ENCODE measurements at regions of chr1 and their contacts with region 1.

Region 1: DNA sequence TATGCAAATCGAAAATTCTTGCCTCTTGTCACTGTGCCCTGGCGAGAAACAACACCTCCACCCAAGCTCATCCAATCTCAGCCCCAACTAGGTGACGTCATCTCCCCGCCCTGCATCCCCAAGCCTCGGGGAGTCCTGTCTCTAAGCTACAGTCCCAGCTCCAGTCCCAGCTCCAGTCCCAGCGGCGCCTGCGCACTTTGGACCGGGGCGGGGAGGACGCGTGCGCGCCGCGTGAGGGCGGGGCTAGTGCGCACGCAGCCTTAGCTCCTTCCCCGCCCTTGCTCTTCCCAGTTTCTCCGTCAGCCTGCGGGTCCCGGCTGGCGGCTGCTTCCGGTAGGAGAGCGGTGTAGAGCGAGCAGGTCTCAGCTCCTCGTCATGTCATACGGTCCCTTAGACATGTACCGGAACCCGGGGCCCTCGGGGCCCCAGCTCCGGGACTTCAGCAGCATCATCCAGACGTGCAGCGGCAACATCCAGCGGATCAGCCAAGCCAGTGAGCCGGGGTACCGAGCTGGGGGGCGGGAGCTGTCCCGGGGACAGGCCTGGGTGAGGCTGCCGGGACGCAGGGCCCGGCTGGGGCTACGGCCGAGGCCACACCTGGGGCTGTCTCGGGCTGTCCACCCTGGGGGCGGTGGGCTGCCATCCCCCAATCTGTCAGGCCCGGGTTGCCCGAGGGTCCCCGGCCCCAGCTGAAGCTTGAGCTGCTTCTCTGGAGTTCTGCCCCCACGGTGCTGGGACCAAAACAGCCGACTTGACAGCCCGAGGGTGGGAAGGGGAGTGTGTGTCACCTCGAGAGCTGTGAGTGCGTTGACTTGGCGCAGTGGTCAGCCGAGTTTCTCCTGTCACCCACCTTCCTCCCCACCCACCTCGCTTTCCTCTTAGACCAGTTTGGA is at the start of gene STX12:
- DNase-seq: peak; percentile 99
- H3K4me3 Mint-ChIP-seq: peak within 1 kb of the TSS; percentile 94
- H3K27ac Mint-ChIP-seq: peak within 1 kb of the TSS; percentile 97
- H3K4me1 Mint-ChIP-seq: peaks cover 22% of the 10 kb centered on the region
- H3K27me3 Mint-ChIP-seq: no peaks in the 10 kb centered on the region
- total RNA-seq, gene STX12: 23.3 and 25.9 TPM in 2 replicates

Region 2: DNA sequence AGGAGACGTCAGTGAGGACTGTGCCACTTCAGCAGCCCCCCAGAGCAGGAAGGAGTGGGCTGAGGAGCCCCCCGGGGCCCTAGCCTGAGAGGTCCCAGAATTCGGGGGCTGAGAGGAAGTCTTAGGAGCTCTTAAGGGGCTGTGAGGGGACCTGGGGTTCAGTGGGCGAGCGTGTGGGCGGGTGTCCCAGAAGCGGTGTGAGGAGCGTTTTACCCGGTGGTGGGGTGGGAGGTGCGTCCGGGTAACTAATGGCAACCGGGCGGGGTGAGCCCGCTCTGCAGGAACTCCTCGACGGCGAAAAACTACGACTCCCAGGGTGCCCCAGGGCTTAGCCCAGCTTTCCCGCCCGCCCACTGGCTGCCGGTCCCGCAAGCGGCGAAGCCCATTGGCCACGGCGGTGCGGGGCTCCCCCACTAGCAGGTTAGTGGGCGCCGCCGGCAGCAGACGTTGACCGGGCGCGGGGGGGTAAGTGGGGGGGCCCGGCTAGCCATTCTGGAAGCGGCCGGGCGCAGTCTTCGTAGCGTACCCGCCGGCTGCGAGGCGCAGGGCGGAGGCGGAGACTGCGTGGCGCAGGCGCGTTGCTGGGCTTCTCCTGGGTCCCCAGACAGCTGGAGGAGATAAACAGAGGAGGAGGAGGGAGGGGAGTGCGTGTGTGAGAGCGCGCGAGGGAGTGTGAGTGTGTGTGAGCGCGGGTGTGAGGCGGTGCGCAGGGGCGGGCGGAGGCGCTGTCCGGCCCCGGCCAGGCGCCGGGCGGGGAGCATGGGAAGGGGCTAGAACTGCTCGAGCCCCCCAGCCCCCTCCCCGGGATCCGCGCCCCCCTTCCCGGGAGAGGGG is 538.9 kb before region 1 on chr1 and contains the start of gene WDTC1:
- intact Hi-C with region 1: loop called (anchors 2 kb)
- DNase-seq: peak; percentile 97
- H3K4me3 Mint-ChIP-seq: peak within 1 kb of the TSS; percentile 98
- H3K27ac Mint-ChIP-seq: peak within 1 kb of the TSS; percentile 96
- H3K4me1 Mint-ChIP-seq: peaks cover 27% of the 10 kb centered on the region
- H3K27me3 Mint-ChIP-seq: no peaks in the 10 kb centered on the region
- total RNA-seq, gene WDTC1: 22.3 and 22.4 TPM in 2 replicates

Region 3: DNA sequence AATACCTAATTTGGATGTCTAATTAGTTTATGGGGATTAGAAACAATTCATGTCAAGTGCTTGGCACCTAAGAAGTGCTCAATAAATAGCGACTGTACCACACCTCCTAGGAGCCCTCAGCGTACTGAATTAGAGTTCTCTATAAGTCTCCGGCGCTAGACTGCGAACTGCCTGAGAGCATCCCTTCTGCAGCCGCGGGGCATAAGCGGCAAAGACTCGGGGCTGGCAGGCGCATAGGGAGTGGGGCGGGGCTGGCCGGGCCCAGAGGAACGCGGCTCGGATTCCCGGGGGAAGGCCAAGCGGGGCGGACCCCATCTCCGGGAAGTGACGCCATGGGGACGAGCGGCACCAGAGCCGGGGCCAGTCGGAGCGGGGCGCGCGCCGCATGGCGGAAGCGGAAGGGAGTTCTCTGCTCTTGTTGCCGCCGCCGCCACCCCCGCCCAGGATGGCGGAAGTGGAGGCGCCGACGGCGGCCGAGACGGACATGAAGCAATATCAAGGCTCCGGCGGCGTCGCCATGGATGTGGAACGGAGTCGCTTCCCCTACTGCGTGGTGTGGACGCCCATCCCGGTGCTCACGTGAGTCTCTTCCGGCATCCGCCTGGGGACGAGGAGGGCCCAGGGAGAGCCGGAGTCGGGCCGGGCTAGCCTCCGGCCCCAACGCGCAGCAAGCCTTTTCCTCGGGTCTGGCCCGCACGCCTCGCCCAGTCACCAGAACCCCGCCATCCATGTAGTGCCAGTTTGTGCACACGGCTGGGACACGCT is 451.2 kb before region 1 on chr1 and contains the start of gene TMEM222:
- intact Hi-C with region 1: loop called (anchors 5 kb)
- DNase-seq: peak; percentile 97
- H3K4me3 Mint-ChIP-seq: peak within 1 kb of the TSS; percentile 97
- H3K27ac Mint-ChIP-seq: peak within 1 kb of the TSS; percentile 90
- H3K4me1 Mint-ChIP-seq: peaks cover 24% of the 10 kb centered on the region
- H3K27me3 Mint-ChIP-seq: peaks cover 3% of the 10 kb centered on the region
- total RNA-seq, gene TMEM222: 32.1 and 35.7 TPM in 2 replicates

Region 4: GRCh38 chr1:27489910-27490741 is 283.1 kb before region 1 on chr1 and contains the start of gene WASF2:
- intact Hi-C with region 1: loop called (anchors 2 kb)
- DNase-seq: peak; percentile 96
- H3K4me3 Mint-ChIP-seq: peak within 1 kb of the TSS; percentile 97
- H3K27ac Mint-ChIP-seq: peak within 1 kb of the TSS; percentile 99
- H3K4me1 Mint-ChIP-seq: peaks cover 24% of the 10 kb centered on the region
- H3K27me3 Mint-ChIP-seq: no peaks in the 10 kb centered on the region
- total RNA-seq, gene WASF2: 125 and 128 TPM in 2 replicates

Region 5: GRCh38 chr1:27671964-27672749 is 101.0 kb before region 1 on chr1 and contains the start of gene IFI6:
- intact Hi-C with region 1: loop called (anchors 1 kb)
- DNase-seq: peak; percentile 83
- H3K4me3 Mint-ChIP-seq: peak within 1 kb of the TSS; percentile 88
- H3K27ac Mint-ChIP-seq: peak within 1 kb of the TSS; percentile 92
- H3K4me1 Mint-ChIP-seq: peaks cover 33% of the 10 kb centered on the region
- H3K27me3 Mint-ChIP-seq: no peaks in the 10 kb centered on the region
- total RNA-seq, gene IFI6: 35.0 and 35.2 TPM in 2 replicates

Region 6: GRCh38 chr1:27725374-27726173 is 47.6 kb before region 1 on chr1 and contains the start of gene FAM76A:
- intact Hi-C with region 1: loop called (anchors 1 kb)
- DNase-seq: peak; percentile 99
- H3K4me3 Mint-ChIP-seq: peak within 1 kb of the TSS; percentile 85
- H3K27ac Mint-ChIP-seq: peak within 1 kb of the TSS; percentile 99
- H3K4me1 Mint-ChIP-seq: peaks cover 14% of the 10 kb centered on the region
- H3K27me3 Mint-ChIP-seq: no peaks in the 10 kb centered on the region
- total RNA-seq, gene FAM76A: 13.6 and 14.0 TPM in 2 replicates

Region 7: DNA sequence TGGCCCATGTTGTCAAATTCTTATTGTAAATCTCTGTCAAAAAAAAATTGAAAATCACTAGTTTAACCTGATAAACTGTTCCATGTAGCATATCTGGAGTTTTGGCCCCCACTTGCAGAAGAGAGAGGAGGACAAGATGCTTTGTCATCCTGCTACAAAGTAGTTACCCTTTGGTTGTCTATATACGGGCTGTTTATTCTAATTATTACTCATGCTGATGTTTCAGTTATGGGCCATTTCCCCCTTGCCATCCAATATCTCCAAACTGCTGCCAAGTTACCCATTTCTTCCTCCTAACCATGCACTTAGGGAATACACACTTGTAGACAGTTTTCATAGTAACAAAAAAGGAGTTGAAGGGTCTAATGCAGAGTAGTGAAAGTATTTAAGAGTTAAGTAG is 22.4 kb after region 1 on chr1:
- intact Hi-C with region 1: no loop called
- DNase-seq: no peak
- H3K4me3 Mint-ChIP-seq: no peak overlapping the region
- H3K27ac Mint-ChIP-seq: no peak overlapping the region
- H3K4me1 Mint-ChIP-seq: peaks cover 13% of the 10 kb centered on the region
- H3K27me3 Mint-ChIP-seq: no peaks in the 10 kb centered on the region

Region 8: GRCh38 chr1:27830621-27831424 is 57.6 kb after region 1 on chr1 and contains the start of gene PPP1R8:
- intact Hi-C with region 1: loop called (anchors 1 kb)
- DNase-seq: peak; percentile 83
- H3K4me3 Mint-ChIP-seq: peak within 1 kb of the TSS; percentile 96
- H3K27ac Mint-ChIP-seq: peak within 1 kb of the TSS; percentile 93
- H3K4me1 Mint-ChIP-seq: peaks cover 26% of the 10 kb centered on the region
- H3K27me3 Mint-ChIP-seq: no peaks in the 10 kb centered on the region
- total RNA-seq, gene PPP1R8: 67.3 and 71.8 TPM in 2 replicates

Region 9: GRCh38 chr1:28428012-28428411 is 654.8 kb after region 1 on chr1:
- intact Hi-C with region 1: no loop called
- DNase-seq: no peak
- H3K4me3 Mint-ChIP-seq: no peak overlapping the region
- H3K27ac Mint-ChIP-seq: no peak overlapping the region
- H3K4me1 Mint-ChIP-seq: peaks cover 4% of the 10 kb centered on the region
- H3K27me3 Mint-ChIP-seq: no peaks in the 10 kb centered on the region

Measured in activated T-helper 2 cell treated with anti-CD3 and anti-CD28 coated beads, Interferon-gamma antibody, Interleukin-2, Interleukin-4, amounts not matched to agents 10 μg/mL and 5 μg/mL and 100 μg/mL, durations not matched to agents 14 hours and 24 hours and 36 hours (primary cell).